ENCODE measurements at regions of chr2 and their contacts with region 1.

Region 1: GRCh38 chr2:68441179-68441993 is 25.7 kb downstream of the FBXO48 start:
- DNase-seq: peak; percentile 97
- ATAC-seq: peak; percentile 96
- H3K4me3 ChIP-seq: peak overlapping the region; percentile 40; the same call in 1 of the 2 replicates
- H3K27ac ChIP-seq: peak overlapping the region; percentile 92
- H3K4me1 ChIP-seq: peaks cover 33% of the 10 kb centered on the region
- H3K27me3 ChIP-seq: no peaks in the 10 kb centered on the region
- CTCF ChIP-seq: peak; percentile 76 to 93 (median 89)
- EP300 ChIP-seq: peak; percentile 75 to 86; a peak in 3 of 4 replicates
- POLR2A ChIP-seq: no peak
- RAD21 ChIP-seq: peak; percentile 100

Region 2: GRCh38 chr2:68062680-68063387 is 378.6 kb before region 1 on chr2 and contains the start of gene C1D:
- CTCF ChIA-PET with region 1: no interaction called
- POLR2A ChIA-PET with region 1: no interaction called
- RAD21 ChIA-PET with region 1: no interaction called
- SMC1A ChIA-PET with region 1: no interaction called
- in situ Hi-C with region 1: loop called (anchors 10 kb)
- intact Hi-C with region 1: loop called (anchors 5 kb)
- DNase-seq: peak; percentile 82
- ATAC-seq: peak; percentile 89
- H3K4me3 ChIP-seq: peak within 1 kb of the TSS; percentile 94
- H3K27ac ChIP-seq: peak within 1 kb of the TSS; percentile 88
- H3K4me1 ChIP-seq: peaks cover 5% of the 10 kb centered on the region; the same call in 1 of the 2 replicates
- H3K27me3 ChIP-seq: no peaks in the 10 kb centered on the region
- CTCF ChIP-seq: no peak
- EP300 ChIP-seq: no peak
- POLR2A ChIP-seq: peak; percentile 74
- RAD21 ChIP-seq: no peak
- polyA plus RNA-seq, gene C1D: 150 to 152 TPM

Region 3: GRCh38 chr2:68196120-68196716 is 245.2 kb before region 1 on chr2:
- CTCF ChIA-PET with region 1: interaction called, 6 read pairs
- POLR2A ChIA-PET with region 1: no interaction called
- RAD21 ChIA-PET with region 1: interaction called, 3 read pairs
- SMC1A ChIA-PET with region 1: interaction called, 7 read pairs
- in situ Hi-C with region 1: loop called (anchors 10 kb)
- intact Hi-C with region 1: loop called (anchors 5 kb)
- DNase-seq: no peak
- ATAC-seq: peak; percentile 40; the same call in 2 of the 3 replicates
- H3K4me3 ChIP-seq: no peak overlapping the region
- H3K27ac ChIP-seq: no peak overlapping the region
- H3K4me1 ChIP-seq: peaks cover 3% of the 10 kb centered on the region; the same call in 1 of the 2 replicates
- H3K27me3 ChIP-seq: no peaks in the 10 kb centered on the region
- CTCF ChIP-seq: peak; percentile 33 to 39 (median 37); a peak in 5 of 6 replicates
- EP300 ChIP-seq: no peak
- POLR2A ChIP-seq: no peak
- RAD21 ChIP-seq: peak; percentile 61

Region 4: GRCh38 chr2:68282811-68283418 is 158.5 kb before region 1 on chr2:
- CTCF ChIA-PET with region 1: interaction called, 7 read pairs
- POLR2A ChIA-PET with region 1: no interaction called
- RAD21 ChIA-PET with region 1: interaction called, 7 read pairs
- SMC1A ChIA-PET with region 1: interaction called, 25 read pairs
- in situ Hi-C with region 1: no loop called
- intact Hi-C with region 1: no loop called
- DNase-seq: no peak
- ATAC-seq: peak; percentile 84
- H3K4me3 ChIP-seq: no peak overlapping the region
- H3K27ac ChIP-seq: no peak overlapping the region
- H3K4me1 ChIP-seq: no peaks in the 10 kb centered on the region
- H3K27me3 ChIP-seq: no peaks in the 10 kb centered on the region
- CTCF ChIP-seq: peak; percentile 69 to 77 (median 70); a peak in 5 of 6 replicates
- EP300 ChIP-seq: no peak
- POLR2A ChIP-seq: no peak
- RAD21 ChIP-seq: peak; percentile 84

Region 5: GRCh38 chr2:68368654-68369336 is 72.6 kb before region 1 on chr2:
- CTCF ChIA-PET with region 1: interaction called, 39 read pairs
- POLR2A ChIA-PET with region 1: interaction called, 47 read pairs
- RAD21 ChIA-PET with region 1: interaction called, 83 read pairs
- SMC1A ChIA-PET with region 1: interaction called, 166 read pairs
- in situ Hi-C with region 1: loop called (anchors 5 kb)
- intact Hi-C with region 1: loop called (anchors 1 kb)
- DNase-seq: no peak
- ATAC-seq: no peak; the same call in 1 of the 3 replicates
- H3K4me3 ChIP-seq: peak overlapping the region; percentile 84
- H3K27ac ChIP-seq: peak overlapping the region; percentile 94
- H3K4me1 ChIP-seq: peaks cover 18% of the 10 kb centered on the region
- H3K27me3 ChIP-seq: no peaks in the 10 kb centered on the region
- CTCF ChIP-seq: no peak
- EP300 ChIP-seq: no peak
- POLR2A ChIP-seq: no peak; the same call in 1 of the 2 replicates
- RAD21 ChIP-seq: no peak

Region 6: GRCh38 chr2:68403199-68403644 is 38.2 kb before region 1 on chr2:
- CTCF ChIA-PET with region 1: interaction called, 14 read pairs
- POLR2A ChIA-PET with region 1: interaction called, 70 read pairs
- RAD21 ChIA-PET with region 1: interaction called, 61 read pairs
- SMC1A ChIA-PET with region 1: interaction called, 80 read pairs
- in situ Hi-C with region 1: no loop called
- intact Hi-C with region 1: no loop called
- DNase-seq: no peak
- ATAC-seq: peak; percentile 89
- H3K4me3 ChIP-seq: no peak overlapping the region
- H3K27ac ChIP-seq: peak overlapping the region; percentile 52
- H3K4me1 ChIP-seq: peaks cover 25% of the 10 kb centered on the region
- H3K27me3 ChIP-seq: no peaks in the 10 kb centered on the region
- CTCF ChIP-seq: no peak
- EP300 ChIP-seq: no peak
- POLR2A ChIP-seq: no peak
- RAD21 ChIP-seq: no peak

Region 7: DNA sequence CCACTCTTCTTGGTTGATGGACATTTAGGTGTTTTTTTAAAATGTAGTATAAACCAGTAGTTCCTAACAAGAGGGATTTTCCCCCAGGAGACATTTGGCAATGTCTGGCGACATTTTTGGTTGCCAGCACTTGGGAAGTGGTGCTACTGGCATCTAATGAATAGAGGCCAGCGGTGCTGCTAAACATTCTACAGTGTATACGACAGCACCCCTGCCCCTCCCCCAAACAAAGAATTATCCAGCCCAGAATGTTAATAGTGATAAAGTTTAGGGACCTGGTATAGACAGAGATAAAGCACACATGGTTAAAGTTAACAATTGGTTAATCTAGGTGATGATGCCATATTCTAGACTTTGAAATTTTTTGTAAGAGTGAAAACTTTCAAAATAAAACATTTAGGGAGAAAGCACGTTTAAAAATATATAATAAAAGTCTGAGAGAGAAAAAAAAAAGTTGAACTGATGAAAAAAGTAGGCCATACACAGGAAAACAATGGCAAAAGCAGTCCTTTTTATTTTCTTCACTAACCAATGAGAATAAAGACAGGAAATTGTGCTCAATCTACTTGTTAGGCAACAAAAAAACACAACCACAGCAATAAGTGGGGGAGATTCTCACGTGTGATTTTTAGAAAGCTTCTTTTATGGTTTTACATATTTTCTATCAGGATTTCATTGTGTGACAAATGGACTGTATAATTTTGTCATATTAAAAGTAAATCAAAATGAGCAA is 10.9 kb after region 1 on chr2:
- CTCF ChIA-PET with region 1: interaction called, 11 read pairs
- POLR2A ChIA-PET with region 1: no interaction called
- RAD21 ChIA-PET with region 1: interaction called, 3 read pairs
- SMC1A ChIA-PET with region 1: interaction called, 6 read pairs
- in situ Hi-C with region 1: no loop called
- intact Hi-C with region 1: no loop called
- DNase-seq: no peak
- ATAC-seq: no peak
- H3K4me3 ChIP-seq: no peak overlapping the region
- H3K27ac ChIP-seq: no peak overlapping the region
- H3K4me1 ChIP-seq: no peaks in the 10 kb centered on the region
- H3K27me3 ChIP-seq: no peaks in the 10 kb centered on the region
- CTCF ChIP-seq: no peak
- EP300 ChIP-seq: no peak
- POLR2A ChIP-seq: no peak
- RAD21 ChIP-seq: no peak

Region 8: DNA sequence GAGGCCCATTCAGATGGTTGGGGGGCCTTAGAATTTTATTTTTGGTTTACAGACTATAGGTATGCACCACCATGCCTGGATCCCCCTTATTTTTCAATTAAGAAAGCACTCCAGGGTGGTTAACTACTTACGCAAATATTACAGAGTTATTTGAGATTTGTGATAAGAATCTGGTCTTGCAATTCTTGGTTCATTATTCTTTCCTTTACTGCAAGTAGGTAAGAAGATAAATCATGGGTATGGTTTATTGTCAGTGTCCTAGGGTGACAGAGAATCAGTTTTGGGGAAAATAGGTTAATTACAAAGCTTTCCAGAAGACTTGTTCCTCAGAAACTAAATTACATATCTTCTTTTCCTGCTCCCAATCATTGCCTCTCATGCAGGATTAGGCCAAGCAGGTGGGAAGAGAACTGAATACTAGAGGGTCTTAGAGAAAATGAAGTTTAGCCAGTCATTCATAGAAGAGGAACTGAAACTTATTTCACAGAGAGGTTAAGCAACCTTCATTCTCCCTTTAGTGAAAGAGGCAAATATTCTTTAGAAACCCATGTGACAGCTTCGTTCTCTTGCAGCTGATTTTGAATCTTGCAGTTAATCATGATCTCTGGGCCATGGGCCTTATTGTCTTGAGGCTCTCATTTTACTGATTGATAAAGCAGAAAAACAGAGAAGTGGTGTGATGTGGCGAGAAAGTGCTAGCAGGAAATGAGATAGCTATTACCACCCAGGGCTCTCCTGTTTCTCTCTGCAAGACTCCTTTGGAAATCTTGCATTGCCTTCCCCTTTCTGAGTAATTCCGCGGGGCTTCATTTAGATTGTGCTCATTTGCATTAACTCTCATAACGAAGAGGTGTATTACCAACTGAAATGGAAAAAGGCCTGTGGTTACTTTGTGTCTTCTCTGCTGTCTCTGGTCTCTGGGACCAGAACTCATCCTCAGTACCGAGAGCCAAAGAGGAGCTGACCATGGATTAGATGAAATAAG is 248.5 kb after region 1 on chr2:
- CTCF ChIA-PET with region 1: no interaction called
- POLR2A ChIA-PET with region 1: no interaction called
- RAD21 ChIA-PET with region 1: no interaction called
- SMC1A ChIA-PET with region 1: no interaction called
- in situ Hi-C with region 1: no loop called
- intact Hi-C with region 1: no loop called
- DNase-seq: peak; percentile 85
- ATAC-seq: peak; percentile 92
- H3K4me3 ChIP-seq: peak overlapping the region; percentile 37
- H3K27ac ChIP-seq: peak overlapping the region; percentile 74
- H3K4me1 ChIP-seq: peaks cover 31% of the 10 kb centered on the region
- H3K27me3 ChIP-seq: no peaks in the 10 kb centered on the region
- CTCF ChIP-seq: no peak
- EP300 ChIP-seq: peak; percentile 45 to 95
- POLR2A ChIP-seq: no peak
- RAD21 ChIP-seq: no peak

Region 9: DNA sequence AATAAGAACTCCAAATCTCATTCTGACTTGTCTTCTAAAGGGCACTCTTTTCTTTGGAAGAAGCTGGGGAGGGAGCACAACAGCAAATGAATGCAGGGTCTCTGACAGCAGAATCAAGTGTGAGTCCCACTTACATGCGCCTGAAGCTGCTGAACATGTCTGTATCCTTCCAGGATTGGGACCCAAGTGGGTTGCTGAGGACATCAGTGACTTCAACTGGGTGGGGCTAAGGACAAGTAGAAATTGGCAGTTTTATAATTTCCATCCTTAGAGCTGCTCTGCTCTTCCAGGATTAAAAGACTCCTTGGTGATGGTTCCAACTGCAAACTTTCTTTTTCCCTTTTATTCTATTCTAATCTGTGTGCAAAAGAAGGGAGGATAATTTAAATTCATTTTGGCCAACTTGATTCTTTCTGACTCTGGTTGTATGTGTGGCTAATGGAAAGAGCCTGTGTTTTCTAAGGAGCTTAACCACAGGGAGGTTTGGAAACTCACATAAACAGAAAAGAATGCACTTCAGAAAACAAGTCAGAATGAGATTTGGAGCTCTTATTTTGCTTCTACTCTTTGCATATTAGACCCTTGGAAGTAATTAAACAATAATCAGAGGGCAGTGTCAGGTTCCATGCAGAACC is 592.2 kb after region 1 on chr2:
- CTCF ChIA-PET with region 1: no interaction called
- POLR2A ChIA-PET with region 1: no interaction called
- RAD21 ChIA-PET with region 1: no interaction called
- SMC1A ChIA-PET with region 1: no interaction called
- in situ Hi-C with region 1: no loop called
- intact Hi-C with region 1: no loop called
- DNase-seq: no peak
- ATAC-seq: no peak
- H3K4me3 ChIP-seq: no peak overlapping the region
- H3K27ac ChIP-seq: no peak overlapping the region
- H3K4me1 ChIP-seq: no peaks in the 10 kb centered on the region
- H3K27me3 ChIP-seq: peaks cover 0 to 3% of the 10 kb centered on the region in 2 experiments; a peak in 2 of 4 replicates
- CTCF ChIP-seq: no peak
- EP300 ChIP-seq: no peak
- POLR2A ChIP-seq: no peak
- RAD21 ChIP-seq: no peak